Uterus (tissue), 4 donors: ENCODE measurements at regions of chr1 and their contacts with region 1.

Region 1: DNA sequence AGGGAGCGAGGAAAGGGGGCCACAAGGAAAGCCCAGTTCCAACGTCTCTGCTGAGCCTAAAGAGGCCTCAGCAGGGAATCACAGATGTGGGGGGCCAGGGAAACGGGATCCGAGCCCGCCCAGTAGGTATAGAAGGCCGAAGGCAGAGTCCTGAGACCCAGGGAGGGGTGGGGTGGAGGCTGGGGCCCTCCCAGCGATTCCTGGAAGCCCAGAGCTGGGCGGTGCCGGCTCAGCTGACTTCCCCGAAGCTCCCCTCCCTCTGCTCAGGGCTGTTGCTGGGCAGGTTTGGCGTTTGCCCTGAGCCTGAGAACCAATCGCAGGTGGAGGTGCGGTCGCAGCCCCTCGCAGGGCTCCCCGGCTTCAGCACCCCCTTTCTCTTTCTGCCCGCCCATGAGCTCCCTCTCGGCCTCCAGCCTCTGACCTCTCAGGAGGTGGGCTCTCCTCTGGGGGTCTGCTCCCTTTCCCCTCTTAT is 12.8 kb downstream of the ADAMTSL4 start:
- DNase-seq: peak; percentile 94
- H3K4me3 ChIP-seq: peak overlapping the region; percentile 55
- H3K27ac ChIP-seq: peak overlapping the region; percentile 99
- H3K4me1 ChIP-seq: peaks cover 47 to 49% of the 10 kb centered on the region in 2 donors
- H3K27me3 ChIP-seq: no peaks in the 10 kb centered on the region
- CTCF ChIP-seq: peak in 1 of 4 experiments; percentile 14
- POLR2A ChIP-seq: peak; percentile 28 to 79

Region 2: GRCh38 chr1:150444232-150444631 is 117.8 kb before region 1 on chr1:
- intact Hi-C with region 1: no loop called
- DNase-seq: no peak
- H3K4me3 ChIP-seq: no peak overlapping the region
- H3K27ac ChIP-seq: no peak overlapping the region
- H3K4me1 ChIP-seq: no peaks in the 10 kb centered on the region
- H3K27me3 ChIP-seq: no peaks in the 10 kb centered on the region
- CTCF ChIP-seq: no peak
- POLR2A ChIP-seq: no peak

Region 3: DNA sequence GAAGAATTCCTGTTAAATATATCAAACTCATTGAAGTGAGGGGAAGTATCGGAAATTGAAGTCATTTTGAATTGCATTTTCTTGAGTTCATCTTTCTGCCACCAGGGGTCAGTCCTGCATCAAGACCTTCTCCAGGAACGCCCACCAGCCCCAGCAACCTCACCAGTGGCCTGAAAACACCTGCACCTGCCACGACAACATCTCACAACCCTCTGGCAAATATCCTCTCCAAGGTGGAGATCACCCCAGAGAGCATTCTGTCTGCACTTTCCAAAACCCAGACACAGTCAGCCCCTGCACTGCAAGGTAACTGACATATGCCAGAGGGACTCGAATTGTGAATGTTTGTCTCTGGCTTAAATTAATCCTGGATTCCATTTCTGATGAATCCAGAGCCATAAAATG is 97.6 kb before region 1 on chr1:
- intact Hi-C with region 1: no loop called
- DNase-seq: peak; percentile 34 to 60
- H3K4me3 ChIP-seq: no peak overlapping the region
- H3K27ac ChIP-seq: no peak overlapping the region
- H3K4me1 ChIP-seq: no peaks in the 10 kb centered on the region
- H3K27me3 ChIP-seq: no peaks in the 10 kb centered on the region
- CTCF ChIP-seq: peak; percentile 72 to 82 (median 76)
- POLR2A ChIP-seq: no peak

Region 4: DNA sequence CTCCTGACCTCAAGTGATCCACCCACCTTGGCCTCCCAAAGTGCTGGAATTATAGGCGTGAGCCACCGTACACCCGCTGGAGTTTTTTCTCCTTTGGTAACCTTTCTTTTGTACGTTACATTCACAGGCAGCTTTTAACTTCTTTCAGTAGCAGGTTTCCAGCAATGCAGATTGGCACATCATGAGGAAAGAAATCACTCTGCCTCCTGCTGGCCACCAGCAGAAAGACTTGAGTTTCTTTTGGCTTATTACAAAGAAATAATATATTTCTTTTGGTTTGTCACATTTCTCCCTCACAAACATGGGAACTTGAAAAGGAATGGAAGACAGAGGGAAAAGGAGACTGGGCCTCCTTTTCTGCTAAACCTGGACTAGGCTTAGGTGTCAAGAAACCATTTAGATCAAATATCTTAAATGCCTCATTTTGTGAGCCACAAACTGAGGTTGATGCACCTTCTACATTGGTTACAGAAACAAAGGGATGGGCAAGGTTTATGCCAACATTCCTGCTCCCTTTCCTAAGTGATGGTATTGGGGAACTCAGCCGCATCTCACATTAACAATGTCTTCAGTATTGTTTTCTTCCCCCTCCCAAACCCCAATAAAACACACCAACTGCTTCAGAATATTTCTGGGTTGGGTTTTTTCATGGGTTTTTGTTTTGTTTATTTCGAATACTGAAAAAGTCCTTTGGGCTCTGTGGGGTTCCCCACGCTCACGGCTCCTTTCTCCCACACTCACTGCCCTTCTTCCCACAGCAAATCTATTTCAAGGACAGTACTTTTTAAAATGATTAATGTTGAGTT is 59.7 kb after region 1 on chr1:
- intact Hi-C with region 1: loop called (anchors 5 kb)
- DNase-seq: peak; percentile 52 to 68
- H3K4me3 ChIP-seq: no peak overlapping the region
- H3K27ac ChIP-seq: peak overlapping the region; percentile 45 to 80
- H3K4me1 ChIP-seq: peaks cover 0 to 9% of the 10 kb centered on the region in 2 donors
- H3K27me3 ChIP-seq: no peaks in the 10 kb centered on the region
- CTCF ChIP-seq: peak; percentile 63 to 81 (median 68)
- POLR2A ChIP-seq: no peak

Region 5: DNA sequence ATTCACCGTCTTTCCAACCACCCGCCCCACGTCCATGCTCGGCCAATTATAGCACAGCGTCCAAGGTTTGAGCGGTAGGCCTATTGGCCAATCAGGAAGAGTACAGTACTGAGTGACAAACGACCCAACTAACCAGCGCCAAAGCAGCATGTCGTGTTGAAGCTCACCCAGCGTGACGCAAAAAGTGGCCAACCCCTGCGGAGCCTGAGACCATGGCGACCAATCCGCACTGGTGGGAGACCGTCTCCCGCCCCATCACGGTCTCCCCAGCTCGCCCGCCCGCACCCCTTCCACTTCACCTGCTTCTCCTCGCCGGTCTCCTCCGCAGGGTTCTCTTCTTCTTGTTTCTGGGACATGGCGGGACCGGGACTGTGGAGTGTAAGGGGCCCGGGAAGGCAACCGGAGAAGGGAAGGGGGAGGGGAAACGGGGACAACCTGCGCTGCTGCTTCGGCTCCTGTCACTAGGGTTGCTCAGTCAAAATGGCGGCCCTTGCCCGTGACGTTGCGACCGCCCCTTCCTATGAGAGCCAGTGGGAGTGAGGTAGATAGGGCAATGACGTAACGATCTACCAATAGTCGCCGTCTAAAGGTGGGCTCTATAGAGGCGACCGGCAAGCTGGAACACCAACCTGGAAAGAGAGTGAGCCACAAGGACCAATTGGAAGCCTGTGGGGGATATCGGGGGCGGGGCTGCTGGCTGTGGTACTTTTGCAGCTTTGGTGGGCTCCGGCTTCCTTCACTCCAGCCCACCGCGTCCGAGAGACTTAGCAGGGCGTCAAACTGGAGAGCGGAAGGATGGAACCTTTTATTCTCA is 67.3 kb after region 1 on chr1 and contains the start of gene ENSA:
- intact Hi-C with region 1: loop called (anchors 5 kb)
- DNase-seq: peak; percentile 96 to 99
- H3K4me3 ChIP-seq: peak within 1 kb of the TSS; percentile 70 to 87
- H3K27ac ChIP-seq: peak within 1 kb of the TSS; percentile 99
- H3K4me1 ChIP-seq: peaks cover 0 to 8% of the 10 kb centered on the region in 2 donors
- H3K27me3 ChIP-seq: no peaks in the 10 kb centered on the region
- CTCF ChIP-seq: peak in 1 of 4 experiments; percentile 16
- POLR2A ChIP-seq: peak; percentile 94 to 98
- total RNA-seq, gene ENSA: 122 to 224 (median 130) TPM

Region 6: DNA sequence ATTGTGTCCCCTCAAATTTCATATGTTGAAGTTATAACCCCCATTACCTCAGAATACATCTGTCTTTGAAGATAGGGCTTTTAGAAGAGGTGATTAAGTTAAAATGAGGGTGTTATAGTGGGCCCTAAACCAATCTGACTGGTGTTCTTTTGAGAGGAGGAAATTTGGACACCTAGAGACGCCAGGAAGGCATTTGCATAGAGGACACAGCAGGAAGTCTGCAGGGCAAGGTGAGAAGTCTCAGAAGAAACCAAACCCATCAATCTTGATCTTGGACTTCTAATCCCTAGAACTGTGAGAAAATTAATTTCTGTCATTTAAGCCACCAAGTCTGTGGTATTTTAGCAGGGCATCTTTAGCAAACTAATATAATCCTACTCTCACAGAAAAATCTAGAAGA is 121.9 kb after region 1 on chr1:
- intact Hi-C with region 1: no loop called
- DNase-seq: no peak
- H3K4me3 ChIP-seq: no peak overlapping the region
- H3K27ac ChIP-seq: no peak overlapping the region
- H3K4me1 ChIP-seq: no peaks in the 10 kb centered on the region
- H3K27me3 ChIP-seq: no peaks in the 10 kb centered on the region
- CTCF ChIP-seq: no peak
- POLR2A ChIP-seq: no peak